Pancreas (tissue), 10 donors: ENCODE measurements at regions of chr5 and their contacts with region 1.

Region 1: DNA sequence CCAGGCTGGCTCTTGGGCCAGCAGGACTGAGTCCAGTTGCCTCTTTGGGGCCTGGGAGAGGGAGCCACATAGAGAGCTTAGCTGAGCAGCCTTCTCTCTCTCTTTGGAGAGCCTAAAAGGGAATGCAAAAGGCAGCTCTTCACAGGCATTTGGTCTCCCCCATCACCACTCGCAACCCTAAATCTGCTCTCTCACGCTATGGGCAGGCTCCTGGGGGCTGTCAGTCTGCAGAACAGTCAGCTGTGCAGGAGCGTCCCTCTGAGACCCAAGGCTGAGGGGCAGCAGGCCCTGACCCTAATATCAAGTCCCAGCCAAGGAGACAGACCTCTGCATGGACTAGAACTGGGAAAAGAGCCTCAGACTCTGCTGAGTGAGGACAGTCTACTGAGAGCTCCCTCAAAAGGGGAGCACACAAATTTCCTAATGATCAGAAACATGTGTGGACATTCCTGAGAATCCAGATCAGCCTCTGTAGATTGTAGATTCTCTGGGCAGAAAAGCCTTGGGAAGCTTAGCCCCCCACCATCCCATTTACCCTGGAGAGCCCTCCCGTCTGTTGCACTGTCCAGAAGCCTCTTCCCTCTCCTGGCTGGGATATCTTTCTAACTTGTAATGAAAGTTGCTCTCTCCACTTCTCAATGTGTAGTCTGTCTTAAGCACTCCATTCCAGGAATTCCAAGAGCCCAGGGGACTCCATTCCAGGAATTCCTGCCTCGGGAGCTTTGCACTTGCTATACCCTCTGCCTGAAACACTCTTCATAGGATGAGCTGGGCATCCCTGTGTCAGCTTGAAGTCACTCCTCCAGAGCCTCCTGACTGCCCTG is 79.4 kb downstream of the FAM114A2 start:
- DNase-seq: no peak
- ATAC-seq: peak in 1 of 4 donors; percentile 17
- H3K4me3 ChIP-seq: no peak overlapping the region
- H3K27ac ChIP-seq: no peak overlapping the region
- H3K4me1 ChIP-seq: no peaks in the 10 kb centered on the region
- H3K27me3 ChIP-seq: no peaks in the 10 kb centered on the region
- CTCF ChIP-seq: no peak

Region 2: DNA sequence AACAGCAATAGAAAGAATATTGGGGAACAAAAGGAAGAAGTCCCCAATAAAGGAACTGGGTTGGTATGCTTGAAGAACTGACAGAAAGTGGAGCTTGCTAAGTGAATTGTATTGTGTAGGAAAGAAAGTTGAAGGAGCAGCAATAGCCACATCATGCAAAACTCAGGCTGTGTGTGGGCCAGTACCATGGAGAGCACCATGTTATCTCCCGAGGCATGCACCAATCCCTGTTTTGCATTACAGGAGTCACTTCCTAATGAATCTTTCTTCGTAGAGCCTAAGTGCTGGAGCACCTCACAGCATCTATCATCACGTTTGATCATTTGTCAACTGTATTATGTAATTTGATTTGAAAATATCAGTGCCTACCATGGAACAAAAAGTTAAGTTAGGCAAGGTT is 1416.6 kb before region 1 on chr5:
- intact Hi-C with region 1: loop called in 2 of 3 experiments (anchors 10 kb)
- DNase-seq: no peak
- ATAC-seq: peak in 1 of 4 donors; percentile 58
- H3K4me3 ChIP-seq: no peak overlapping the region
- H3K27ac ChIP-seq: no peak overlapping the region
- H3K4me1 ChIP-seq: no peaks in the 10 kb centered on the region
- H3K27me3 ChIP-seq: no peaks in the 10 kb centered on the region
- CTCF ChIP-seq: no peak

Region 3: GRCh38 chr5:153998010-153998409 is 38.7 kb after region 1 on chr5:
- intact Hi-C with region 1: no loop called
- DNase-seq: no peak
- ATAC-seq: no peak
- H3K4me3 ChIP-seq: no peak overlapping the region
- H3K27ac ChIP-seq: no peak overlapping the region
- H3K4me1 ChIP-seq: peaks cover 0 to 3% (median 0%) of the 10 kb centered on the region in 3 donors
- H3K27me3 ChIP-seq: no peaks in the 10 kb centered on the region
- CTCF ChIP-seq: no peak